PC-3 (cell line): ENCODE measurements at regions of chr18 and their contacts with region 1.

Region 1: DNA sequence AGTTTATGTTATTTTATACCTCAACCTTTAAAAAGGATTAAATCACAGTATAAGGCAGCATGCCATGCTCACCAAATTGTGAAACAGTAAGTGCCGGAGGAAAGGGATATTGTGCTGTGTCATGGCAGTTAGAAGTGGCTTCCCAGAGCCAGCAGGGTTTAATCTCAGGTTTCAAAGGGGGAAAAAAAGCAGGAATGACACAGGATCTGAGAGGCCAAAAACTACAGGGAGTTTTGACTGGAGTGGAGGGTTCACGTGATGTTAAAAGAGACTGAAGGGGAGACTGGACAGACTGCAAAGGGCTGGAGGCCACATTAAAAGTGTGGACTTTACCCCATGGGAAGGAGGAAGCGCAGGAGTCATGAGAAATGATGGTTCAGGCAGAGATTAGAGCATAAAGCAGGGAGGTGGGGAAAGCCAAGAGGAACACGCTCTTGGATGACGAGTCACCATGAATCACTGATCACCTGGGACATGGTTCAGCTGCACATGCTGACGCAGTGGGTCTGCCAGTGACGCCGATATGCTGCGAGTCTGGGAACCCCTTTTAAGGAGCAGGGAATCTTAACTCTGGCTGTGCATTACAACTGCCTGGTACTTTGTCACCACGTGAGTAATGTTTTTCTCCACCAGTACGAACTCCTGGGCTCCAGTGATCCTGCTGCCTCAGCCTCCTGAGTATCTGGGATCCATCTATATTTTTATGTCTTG is 6.1 kb downstream of the CHMP1B start:
- DNase-seq: peak; percentile 99
- ATAC-seq: peak; percentile 71
- H3K4me3 ChIP-seq: peak overlapping the region; percentile 7; the same call in 1 of the 2 replicates
- H3K27ac ChIP-seq: peak overlapping the region; percentile 96
- H3K4me1 ChIP-seq: peaks cover 55% of the 10 kb centered on the region
- H3K27me3 ChIP-seq: no peaks in the 10 kb centered on the region
- CTCF ChIP-seq: no peak

Region 2: DNA sequence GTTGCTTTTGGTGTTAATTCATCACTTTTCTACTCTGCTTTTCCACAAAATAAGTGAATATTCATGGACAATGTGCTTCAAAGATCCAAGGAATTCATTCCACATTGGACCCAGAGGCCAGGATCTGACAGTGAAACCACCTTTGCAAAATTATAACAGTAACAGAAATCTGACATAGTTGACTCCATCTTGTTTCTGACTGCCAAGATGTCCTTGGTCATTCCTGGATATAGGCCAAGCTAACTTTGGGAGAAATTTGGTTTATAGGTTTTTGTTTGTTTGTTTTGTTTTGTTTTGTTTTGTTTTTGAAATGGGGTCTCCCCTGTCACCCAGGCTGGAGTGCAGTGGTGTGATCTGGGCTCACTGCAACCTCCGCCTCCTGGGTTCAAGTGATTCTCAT is 40.4 kb after region 1 on chr18:
- CTCF ChIA-PET with region 1: no interaction called
- POLR2A ChIA-PET with region 1: no interaction called
- intact Hi-C with region 1: no loop called
- DNase-seq: no peak
- ATAC-seq: no peak
- H3K4me3 ChIP-seq: no peak overlapping the region
- H3K27ac ChIP-seq: no peak overlapping the region
- H3K4me1 ChIP-seq: peaks cover 2% of the 10 kb centered on the region; the same call in 1 of the 2 replicates
- H3K27me3 ChIP-seq: no peaks in the 10 kb centered on the region
- CTCF ChIP-seq: no peak

Region 3: GRCh38 chr18:11908182-11909060 is 51.1 kb after region 1 on chr18 and contains the start of gene MPPE1:
- CTCF ChIA-PET with region 1: no interaction called
- POLR2A ChIA-PET with region 1: no interaction called
- intact Hi-C with region 1: loop called (anchors 2 kb)
- DNase-seq: peak; percentile 86
- ATAC-seq: peak; percentile 87
- H3K4me3 ChIP-seq: peak within 1 kb of the TSS; percentile 91
- H3K27ac ChIP-seq: peak within 1 kb of the TSS; percentile 81
- H3K4me1 ChIP-seq: peaks cover 31% of the 10 kb centered on the region
- H3K27me3 ChIP-seq: no peaks in the 10 kb centered on the region
- CTCF ChIP-seq: no peak
- total RNA-seq, gene MPPE1: 15.8 and 17.9 TPM in 2 replicates